T-cell (primary cell): ENCODE measurements at regions of chr4 and their contacts with region 1.

Region 1: DNA sequence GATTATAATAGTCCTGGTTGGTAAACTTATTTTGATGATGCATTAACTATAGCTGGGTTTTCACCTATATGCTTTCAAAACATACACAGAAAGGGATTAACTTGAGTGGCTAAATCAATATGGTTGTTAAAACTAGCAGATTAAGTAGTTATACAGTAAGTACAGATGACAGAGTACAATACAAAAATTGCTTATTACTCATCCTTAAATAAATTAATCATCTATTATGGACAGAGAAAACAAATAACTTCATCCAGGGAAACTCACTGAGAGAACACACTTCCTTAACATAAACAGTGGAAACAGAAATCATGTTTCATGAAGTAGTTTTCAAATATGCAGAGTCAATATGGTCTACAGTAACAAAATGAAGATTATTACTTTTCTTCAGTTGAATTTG is 133.4 kb downstream of the AREG start:
- DNase-seq: no peak
- ATAC-seq: no peak
- H3K4me3 ChIP-seq: no peak overlapping the region
- H3K4me3 Mint-ChIP-seq: no peak overlapping the region
- H3K27ac ChIP-seq: no peak overlapping the region
- H3K27ac Mint-ChIP-seq: no peak overlapping the region
- H3K4me1 ChIP-seq: no peaks in the 10 kb centered on the region
- H3K4me1 Mint-ChIP-seq: no peaks in the 10 kb centered on the region
- H3K27me3 ChIP-seq: no peaks in the 10 kb centered on the region
- H3K27me3 Mint-ChIP-seq: peaks cover 0 to 4% of the 10 kb centered on the region in 2 donors

Region 2: DNA sequence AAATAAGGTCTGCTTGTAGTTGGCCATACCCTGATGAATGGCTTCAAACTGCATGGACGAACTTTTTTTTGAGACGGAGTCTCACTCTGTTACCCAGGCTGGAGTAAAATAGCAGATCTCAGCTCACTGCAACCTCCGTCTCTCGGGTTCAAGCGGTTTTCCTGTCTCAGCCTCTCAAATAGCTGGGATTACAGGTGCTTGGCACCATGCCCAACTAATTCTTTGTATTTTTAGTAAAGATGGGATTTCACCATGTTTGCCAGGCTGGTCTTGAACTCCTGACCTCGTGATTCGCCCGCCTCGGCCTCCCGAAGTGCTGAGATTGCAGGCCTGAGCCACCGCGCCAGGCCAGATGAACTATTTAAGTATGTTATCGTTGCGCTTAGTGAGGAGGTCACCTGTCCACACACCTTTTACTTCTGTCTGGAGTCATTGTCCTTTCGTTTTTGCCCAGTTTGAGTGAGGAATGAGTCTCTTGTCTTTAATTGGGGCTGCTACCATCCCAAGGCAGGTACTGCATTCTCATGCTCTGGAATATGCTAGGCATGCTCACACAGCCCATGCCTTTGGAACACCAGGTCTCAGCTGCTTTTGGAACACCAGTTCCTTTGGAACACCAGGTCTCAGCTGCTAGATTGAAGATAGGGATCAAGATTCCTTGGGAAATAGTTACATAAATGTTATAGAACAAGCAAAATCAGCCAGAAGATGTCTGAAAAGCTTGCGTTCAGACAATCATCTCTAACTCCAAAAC is 60.5 kb before region 1 on chr4:
- CTCF ChIA-PET with region 1: no interaction called
- POLR2A ChIA-PET with region 1: interaction called in 1 of 2 experiments, 15 read pairs
- DNase-seq: no peak
- ATAC-seq: no peak
- H3K4me3 ChIP-seq: no peak overlapping the region
- H3K4me3 Mint-ChIP-seq: no peak overlapping the region
- H3K27ac ChIP-seq: no peak overlapping the region
- H3K27ac Mint-ChIP-seq: no peak overlapping the region
- H3K4me1 ChIP-seq: no peaks in the 10 kb centered on the region
- H3K4me1 Mint-ChIP-seq: no peaks in the 10 kb centered on the region
- H3K27me3 ChIP-seq: no peaks in the 10 kb centered on the region
- H3K27me3 Mint-ChIP-seq: no peaks in the 10 kb centered on the region

Region 3: GRCh38 chr4:74590152-74590875 is 12.0 kb after region 1 on chr4:
- CTCF ChIA-PET with region 1: no interaction called
- POLR2A ChIA-PET with region 1: no interaction called
- DNase-seq: no peak
- ATAC-seq: no peak
- H3K4me3 ChIP-seq: no peak overlapping the region
- H3K4me3 Mint-ChIP-seq: no peak overlapping the region
- H3K27ac ChIP-seq: no peak overlapping the region
- H3K27ac Mint-ChIP-seq: no peak overlapping the region
- H3K4me1 ChIP-seq: no peaks in the 10 kb centered on the region
- H3K4me1 Mint-ChIP-seq: no peaks in the 10 kb centered on the region
- H3K27me3 ChIP-seq: no peaks in the 10 kb centered on the region
- H3K27me3 Mint-ChIP-seq: no peaks in the 10 kb centered on the region

Region 4: DNA sequence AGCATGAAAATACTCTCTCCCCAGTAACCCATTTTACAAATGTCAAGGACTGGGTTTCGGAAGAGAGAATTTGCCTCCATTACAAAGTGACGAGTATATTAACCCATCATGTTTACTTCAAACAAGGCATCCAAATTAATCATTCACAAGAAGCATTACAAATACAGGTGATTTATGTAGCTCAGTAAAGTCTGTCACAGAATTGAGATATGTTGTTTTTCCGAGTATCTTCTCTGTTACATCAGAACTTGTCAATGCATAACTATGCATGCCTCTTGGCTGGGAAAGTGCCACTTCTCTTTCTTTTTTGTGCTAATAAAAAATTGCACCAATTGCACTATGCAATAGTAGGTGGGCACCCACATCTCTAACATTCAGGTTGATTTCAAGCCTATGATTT is 24.9 kb after region 1 on chr4:
- CTCF ChIA-PET with region 1: interaction called in 1 of 2 experiments, 11 read pairs
- POLR2A ChIA-PET with region 1: no interaction called
- DNase-seq: no peak
- ATAC-seq: no peak
- H3K4me3 ChIP-seq: no peak overlapping the region
- H3K4me3 Mint-ChIP-seq: no peak overlapping the region
- H3K27ac ChIP-seq: no peak overlapping the region
- H3K27ac Mint-ChIP-seq: no peak overlapping the region
- H3K4me1 ChIP-seq: no peaks in the 10 kb centered on the region
- H3K4me1 Mint-ChIP-seq: no peaks in the 10 kb centered on the region
- H3K27me3 ChIP-seq: no peaks in the 10 kb centered on the region
- H3K27me3 Mint-ChIP-seq: no peaks in the 10 kb centered on the region